Caco-2 (cell line): ENCODE measurements at regions of chr7 and their contacts with region 1.

Region 1: DNA sequence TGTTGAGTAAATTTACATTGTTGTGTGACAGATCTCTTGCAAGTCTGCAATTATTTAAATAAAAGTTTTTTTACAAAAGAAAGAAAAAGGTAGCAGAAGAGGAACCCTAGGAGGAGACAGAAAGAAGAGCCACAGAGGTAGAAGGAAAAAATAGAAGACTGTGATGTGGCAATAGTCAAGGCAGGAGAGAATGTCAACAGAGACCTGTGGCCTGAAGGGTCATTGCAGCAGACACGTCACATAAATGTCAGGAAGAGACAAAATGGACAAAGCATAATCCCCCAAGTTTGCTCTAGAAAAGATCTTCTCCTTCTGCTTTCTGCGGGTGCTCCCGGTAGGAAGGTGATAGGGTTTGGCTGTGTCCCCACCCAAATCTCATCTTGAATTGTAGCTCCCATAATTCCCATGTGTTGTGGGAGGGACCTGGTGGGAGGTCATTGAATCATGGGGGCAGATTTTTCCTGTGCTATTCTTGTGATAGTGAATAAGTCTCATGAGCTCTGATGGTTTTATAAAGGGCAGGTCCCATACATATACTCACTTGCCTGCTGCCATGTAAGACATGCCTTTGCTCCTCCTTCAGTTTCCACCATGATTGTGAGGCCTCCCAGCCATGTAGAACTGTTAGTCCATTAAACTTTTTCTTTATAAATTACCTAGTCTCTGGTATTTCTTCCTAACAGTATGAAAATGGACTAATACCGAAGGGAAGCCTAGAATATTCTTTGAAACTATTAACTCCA is 41.1 kb upstream of the KDM7A start:
- DNase-seq: no peak
- H3K4me3 ChIP-seq: no peak overlapping the region
- H3K4me3 Mint-ChIP-seq: no peak overlapping the region
- H3K27ac Mint-ChIP-seq: no peak overlapping the region
- H3K4me1 ChIP-seq: no peaks in the 10 kb centered on the region
- H3K4me1 Mint-ChIP-seq: no peaks in the 10 kb centered on the region
- H3K27me3 ChIP-seq: no peaks in the 10 kb centered on the region
- H3K27me3 Mint-ChIP-seq: no peaks in the 10 kb centered on the region
- CTCF ChIP-seq: no peak

Region 2: GRCh38 chr7:140182917-140183316 is 35.0 kb before region 1 on chr7:
- CTCF ChIA-PET with region 1: no interaction called
- POLR2A ChIA-PET with region 1: no interaction called
- intact Hi-C with region 1: loop called (anchors 1 kb)
- DNase-seq: no peak
- H3K4me3 ChIP-seq: no peak overlapping the region
- H3K4me3 Mint-ChIP-seq: no peak overlapping the region
- H3K27ac Mint-ChIP-seq: no peak overlapping the region
- H3K4me1 ChIP-seq: no peaks in the 10 kb centered on the region
- H3K4me1 Mint-ChIP-seq: peaks cover 6% of the 10 kb centered on the region
- H3K27me3 ChIP-seq: no peaks in the 10 kb centered on the region
- H3K27me3 Mint-ChIP-seq: peaks cover 31% of the 10 kb centered on the region
- CTCF ChIP-seq: no peak

Region 3: DNA sequence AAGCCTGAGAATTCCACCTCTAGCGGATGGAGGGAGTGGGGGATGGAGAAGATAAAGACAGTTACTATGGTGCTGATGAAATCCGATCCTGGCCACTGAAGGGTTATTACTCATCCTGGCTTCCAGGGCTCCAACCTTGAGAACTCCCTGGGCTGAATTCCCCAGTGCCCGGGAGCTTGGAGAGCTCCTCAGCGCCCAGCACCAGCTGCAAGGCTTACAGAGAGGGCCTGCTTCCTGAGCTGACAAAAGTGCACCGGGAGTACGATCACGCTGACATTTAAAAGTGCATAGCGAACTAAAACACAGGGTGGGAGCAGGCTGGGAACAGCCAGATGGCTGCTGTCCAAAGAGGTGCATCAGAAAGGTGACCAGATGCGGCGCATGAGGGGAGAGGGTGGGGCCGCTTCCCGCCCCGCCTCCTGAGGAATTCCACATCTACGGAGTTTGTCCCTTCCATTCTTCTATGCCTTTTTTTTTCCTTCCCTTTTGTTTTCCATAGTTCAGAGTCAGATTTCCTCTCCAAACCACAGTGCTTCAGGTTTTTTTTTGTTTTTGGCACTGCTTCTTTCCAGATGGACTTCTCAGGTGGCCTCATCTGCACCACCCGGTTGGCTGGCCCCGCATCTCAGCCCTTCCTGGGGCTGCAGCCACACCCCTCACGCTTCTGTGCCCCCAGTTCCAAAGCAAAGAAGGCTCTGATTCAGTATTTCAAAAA is 323.7 kb after region 1 on chr7:
- CTCF ChIA-PET with region 1: interaction called, 11 read pairs
- POLR2A ChIA-PET with region 1: no interaction called
- intact Hi-C with region 1: no loop called
- DNase-seq: peak in 1 of 2 experiments; percentile 42
- H3K4me3 ChIP-seq: no peak overlapping the region
- H3K4me3 Mint-ChIP-seq: no peak overlapping the region
- H3K27ac Mint-ChIP-seq: peak overlapping the region; percentile 66
- H3K4me1 ChIP-seq: 0 out of 2 replicates have a peak, but pooled peaks cover 11% of the 10 kb centered on the region
- H3K4me1 Mint-ChIP-seq: peaks cover 24% of the 10 kb centered on the region
- H3K27me3 ChIP-seq: no peaks in the 10 kb centered on the region
- H3K27me3 Mint-ChIP-seq: no peaks in the 10 kb centered on the region
- CTCF ChIP-seq: no peak